ENCODE measurements at regions of chr2 and their contacts with region 1.

Region 1: GRCh38 chr2:17646081-17646554 is 105.6 kb downstream of the VSNL1 start:
- H3K4me3 ChIP-seq: no peak overlapping the region
- H3K27ac ChIP-seq: no peak overlapping the region
- H3K4me1 ChIP-seq: peaks cover 5% of the 10 kb centered on the region
- CTCF ChIP-seq: peak; percentile 29; the same call in 1 of the 2 replicates

Region 2: GRCh38 chr2:17658251-17658843 is 12.2 kb after region 1 on chr2:
- CTCF ChIA-PET with region 1: interaction called, 14 read pairs
- POLR2A ChIA-PET with region 1: no interaction called
- H3K4me3 ChIP-seq: no peak overlapping the region
- H3K27ac ChIP-seq: no peak overlapping the region
- H3K4me1 ChIP-seq: no peaks in the 10 kb centered on the region
- CTCF ChIP-seq: no peak

Region 3: GRCh38 chr2:17934721-17935120 is 288.6 kb after region 1 on chr2:
- CTCF ChIA-PET with region 1: no interaction called
- POLR2A ChIA-PET with region 1: no interaction called
- H3K4me3 ChIP-seq: no peak overlapping the region
- H3K27ac ChIP-seq: no peak overlapping the region
- H3K4me1 ChIP-seq: no peaks in the 10 kb centered on the region
- CTCF ChIP-seq: no peak

Region 4: DNA sequence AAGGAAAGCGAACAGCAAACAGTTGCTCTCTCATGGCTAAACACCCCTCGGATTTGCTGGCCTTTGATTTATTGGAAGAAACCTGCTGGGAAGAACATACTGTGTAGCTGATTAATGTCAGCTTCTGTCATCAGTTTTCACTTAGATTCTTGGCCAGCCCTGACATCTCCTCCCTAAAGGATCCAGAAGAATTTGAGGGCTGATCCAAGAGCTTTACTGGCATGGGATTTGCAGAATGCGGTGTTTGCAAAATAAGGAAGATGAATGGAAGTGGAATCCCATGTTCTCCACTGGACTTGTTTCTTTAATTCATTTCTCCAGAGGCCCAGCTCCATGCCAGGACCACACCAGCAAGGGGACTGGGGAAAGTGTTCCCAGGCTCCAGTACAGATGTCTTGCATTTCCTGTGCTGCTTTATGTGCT is 833.8 kb after region 1 on chr2:
- CTCF ChIA-PET with region 1: no interaction called
- POLR2A ChIA-PET with region 1: no interaction called
- H3K4me3 ChIP-seq: no peak overlapping the region
- H3K27ac ChIP-seq: 0 out of 2 replicates have a peak overlapping the region, but pooled peaks have one; percentile 6
- H3K4me1 ChIP-seq: no peaks in the 10 kb centered on the region; the same call in 1 of the 2 replicates
- CTCF ChIP-seq: no peak